HCT116 (cell line): ENCODE measurements at regions of chr18 and their contacts with region 1.

Region 1: GRCh38 chr18:26648509-26649192 is 100.3 kb upstream of the KCTD1 start:
- DNase-seq: no peak
- ATAC-seq: no peak
- H3K4me3 ChIP-seq: no peak overlapping the region
- H3K27ac ChIP-seq: no peak overlapping the region
- H3K4me1 ChIP-seq: peaks cover 0 to 3% of the 10 kb centered on the region in 2 experiments; a peak in 1 of 4 replicates
- H3K27me3 ChIP-seq: peaks cover 10% of the 10 kb centered on the region
- CTCF ChIP-seq: no peak
- POLR2A ChIP-seq: no peak
- RAD21 ChIP-seq: no peak

Region 2: DNA sequence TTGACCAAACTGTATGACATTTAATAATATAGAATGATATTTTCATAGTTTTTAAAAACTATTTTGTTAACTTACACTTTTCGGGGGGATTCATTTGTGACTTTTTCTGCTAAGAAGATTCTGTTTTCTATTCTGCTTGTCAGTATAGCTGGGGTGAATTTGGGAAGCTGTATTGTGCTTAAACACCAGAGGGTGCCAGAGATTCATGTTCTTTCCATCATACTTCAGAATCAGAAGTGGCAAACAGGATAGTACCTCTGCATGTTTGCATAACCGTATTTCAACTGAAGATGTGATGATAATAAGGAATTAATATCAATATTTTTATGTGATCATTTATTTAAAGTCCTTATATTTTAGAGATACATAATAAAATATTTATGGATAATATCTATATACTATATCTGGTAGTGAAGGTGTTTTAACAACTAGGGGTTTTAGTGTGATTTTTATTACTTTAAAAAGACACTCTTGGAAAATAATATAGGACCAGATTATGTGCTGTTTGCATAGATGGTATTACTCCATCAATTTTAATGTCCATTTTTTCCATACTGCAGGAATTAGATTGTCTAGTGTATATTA is 341.4 kb before region 1 on chr18:
- CTCF ChIA-PET with region 1: interaction called, 4 read pairs
- POLR2A ChIA-PET with region 1: no interaction called
- RAD21 ChIA-PET with region 1: no interaction called
- intact Hi-C with region 1: loop called (anchors 2 kb)
- DNase-seq: peak; percentile 15
- ATAC-seq: peak; percentile 71
- H3K4me3 ChIP-seq: no peak overlapping the region
- H3K27ac ChIP-seq: no peak overlapping the region
- H3K4me1 ChIP-seq: no peaks in the 10 kb centered on the region
- H3K27me3 ChIP-seq: no peaks in the 10 kb centered on the region
- CTCF ChIP-seq: peak; percentile 48 to 67 (median 62); a peak in 5 of 6 replicates
- POLR2A ChIP-seq: no peak
- RAD21 ChIP-seq: peak; percentile 71

Region 3: DNA sequence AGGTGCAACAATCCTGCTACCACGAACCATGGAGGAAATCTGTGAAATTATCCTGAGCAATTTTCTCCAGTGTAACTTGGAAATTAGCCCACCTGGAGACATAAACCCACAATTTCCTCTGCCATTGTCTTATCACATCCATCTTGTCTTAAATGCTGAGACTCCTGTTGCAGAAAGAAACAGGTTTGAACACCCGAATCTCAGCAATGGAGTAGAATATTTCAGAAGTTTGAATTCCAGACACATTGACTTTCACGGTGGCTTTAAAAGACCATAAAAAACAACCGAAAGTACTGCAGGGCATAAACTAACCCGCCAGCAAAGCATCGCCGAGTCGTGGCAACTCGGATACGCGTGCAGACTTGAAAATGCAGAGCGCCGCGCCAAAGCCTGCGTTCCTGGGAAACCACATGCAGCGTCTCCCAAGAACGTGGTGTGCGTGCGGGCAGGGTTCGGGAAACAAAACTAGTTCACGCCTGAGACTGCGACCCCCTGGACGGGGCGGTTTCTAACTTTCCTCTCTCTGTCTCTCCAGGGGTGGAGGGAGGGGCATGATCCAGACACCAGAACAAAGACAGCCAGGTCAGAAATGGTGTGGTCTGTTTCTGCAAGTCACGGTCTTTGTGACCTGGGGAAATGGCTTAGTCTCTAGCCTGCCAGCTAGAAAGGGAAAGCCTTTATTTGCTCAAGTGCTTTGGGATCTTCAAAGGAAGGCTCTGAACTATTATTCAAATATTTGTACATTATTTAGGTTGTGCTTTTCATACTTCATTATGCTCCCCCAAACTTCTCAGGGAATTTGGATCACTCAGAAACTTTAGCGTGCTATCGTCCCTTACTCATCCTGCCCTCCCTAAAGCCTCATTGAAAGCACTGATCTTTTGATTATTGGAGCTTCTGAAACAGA is 73.4 kb before region 1 on chr18:
- CTCF ChIA-PET with region 1: no interaction called
- POLR2A ChIA-PET with region 1: no interaction called
- RAD21 ChIA-PET with region 1: no interaction called
- intact Hi-C with region 1: no loop called
- DNase-seq: no peak
- ATAC-seq: peak; percentile 67
- H3K4me3 ChIP-seq: peak overlapping the region; percentile 40 to 57
- H3K27ac ChIP-seq: peak overlapping the region; percentile 14
- H3K4me1 ChIP-seq: peaks cover 13 to 36% of the 10 kb centered on the region in 2 experiments; a peak in 3 of 4 replicates
- H3K27me3 ChIP-seq: no peaks in the 10 kb centered on the region
- CTCF ChIP-seq: no peak
- POLR2A ChIP-seq: no peak
- RAD21 ChIP-seq: no peak

Region 4: DNA sequence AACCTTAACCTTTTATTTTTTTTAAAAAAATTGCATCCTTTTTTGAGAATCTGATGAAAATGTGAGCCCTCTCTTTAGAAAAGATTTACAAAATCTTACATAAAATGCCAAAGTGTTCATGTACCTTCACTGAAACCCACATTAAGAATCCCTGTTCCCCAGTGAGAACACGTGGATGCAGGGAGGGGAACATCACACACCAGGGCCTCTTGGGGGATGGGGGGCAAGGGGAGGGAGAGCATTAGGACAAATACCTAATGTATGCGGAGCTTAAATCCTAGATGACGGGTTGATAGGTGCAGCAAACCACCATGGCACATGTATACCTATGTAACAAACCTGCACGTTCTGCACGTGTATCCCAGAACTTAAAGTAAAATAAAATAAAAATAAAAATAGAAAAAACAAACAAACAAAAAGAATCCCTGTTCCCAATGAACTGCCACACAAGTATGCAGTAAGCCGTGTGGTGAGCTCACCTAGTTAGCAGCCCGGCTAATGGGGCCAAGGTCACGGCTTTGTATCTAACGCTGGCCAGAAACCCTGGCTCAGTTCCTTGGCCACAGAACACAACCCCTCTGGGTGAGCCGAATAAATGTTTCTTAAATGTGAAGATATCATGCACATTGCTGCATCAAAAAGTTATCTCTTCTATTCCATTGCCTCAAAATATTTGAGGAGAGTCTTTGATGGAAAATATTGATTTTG is 495.1 kb after region 1 on chr18:
- CTCF ChIA-PET with region 1: no interaction called
- POLR2A ChIA-PET with region 1: no interaction called
- RAD21 ChIA-PET with region 1: no interaction called
- intact Hi-C with region 1: no loop called
- DNase-seq: no peak
- ATAC-seq: no peak
- H3K4me3 ChIP-seq: no peak overlapping the region
- H3K27ac ChIP-seq: no peak overlapping the region
- H3K4me1 ChIP-seq: no peaks in the 10 kb centered on the region
- H3K27me3 ChIP-seq: no peaks in the 10 kb centered on the region
- CTCF ChIP-seq: no peak
- POLR2A ChIP-seq: no peak
- RAD21 ChIP-seq: no peak